ENCODE measurements at regions of chr16 and their contacts with region 1.

Region 1: DNA sequence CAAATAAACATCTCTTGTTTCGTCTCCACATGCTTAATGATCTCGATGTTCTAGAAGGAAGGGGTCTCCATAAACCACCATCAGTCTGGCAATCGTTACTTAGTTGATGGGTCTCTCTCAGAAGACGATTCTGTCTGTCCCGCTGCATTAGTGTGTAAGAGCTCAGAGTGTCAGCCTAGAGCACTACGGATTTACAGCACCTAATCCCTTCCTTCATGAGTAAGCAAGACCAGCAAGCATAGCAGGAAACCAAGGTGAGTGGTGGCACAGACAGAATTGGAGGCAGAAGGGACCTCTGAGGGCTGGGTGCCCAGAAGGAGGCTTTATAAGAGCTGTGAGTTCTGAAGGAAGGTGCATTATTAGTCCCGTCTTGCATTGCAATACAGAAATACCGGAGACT is 440.1 kb downstream of the RBFOX1 start:
- DNase-seq: no peak

Region 2: DNA sequence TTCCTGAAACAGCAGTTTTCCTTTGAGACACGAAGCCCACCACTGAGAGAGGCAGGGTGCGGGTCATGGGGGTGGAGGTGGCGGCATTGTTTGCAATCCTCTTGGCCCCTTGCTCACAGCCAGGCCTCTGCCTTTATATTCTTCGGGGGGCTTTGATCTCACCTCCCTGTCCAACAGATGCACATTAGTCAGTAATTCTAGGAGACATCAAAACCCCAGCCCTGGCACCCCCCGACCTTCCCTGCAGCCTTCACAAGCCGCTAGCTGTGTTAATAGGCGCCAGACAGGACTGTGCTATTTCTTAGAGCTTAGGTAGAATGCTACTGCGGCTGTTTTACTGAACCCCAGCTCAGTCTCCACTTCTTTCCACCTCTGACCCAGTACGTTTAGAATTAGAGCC is 227.5 kb before region 1 on chr16:
- intact Hi-C with region 1: no loop called
- DNase-seq: no peak

Region 3: DNA sequence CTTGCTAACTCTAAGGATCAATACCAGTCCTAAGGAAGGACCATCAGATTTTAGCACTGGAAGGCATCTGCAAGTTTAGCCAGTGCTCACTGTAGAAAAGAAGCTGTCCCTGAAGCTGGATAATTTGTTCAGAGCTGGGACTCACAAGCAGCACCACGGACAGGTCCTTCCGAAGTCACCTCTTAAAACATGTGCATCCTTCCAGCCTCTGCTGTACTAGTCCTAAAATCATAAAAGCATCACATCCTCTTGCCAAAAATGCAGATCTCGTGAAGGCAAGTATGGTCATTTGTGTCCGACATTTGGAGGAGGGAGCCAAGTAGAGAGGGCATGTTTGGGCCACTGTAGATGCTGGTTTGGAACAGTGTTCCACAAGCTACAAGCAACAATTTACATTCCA is 66.8 kb after region 1 on chr16:
- intact Hi-C with region 1: loop called (anchors 10 kb)
- DNase-seq: no peak